Left ventricle myocardium inferior (tissue), 1 donor: ENCODE measurements at regions of chr11 and their contacts with region 1.

Region 1: DNA sequence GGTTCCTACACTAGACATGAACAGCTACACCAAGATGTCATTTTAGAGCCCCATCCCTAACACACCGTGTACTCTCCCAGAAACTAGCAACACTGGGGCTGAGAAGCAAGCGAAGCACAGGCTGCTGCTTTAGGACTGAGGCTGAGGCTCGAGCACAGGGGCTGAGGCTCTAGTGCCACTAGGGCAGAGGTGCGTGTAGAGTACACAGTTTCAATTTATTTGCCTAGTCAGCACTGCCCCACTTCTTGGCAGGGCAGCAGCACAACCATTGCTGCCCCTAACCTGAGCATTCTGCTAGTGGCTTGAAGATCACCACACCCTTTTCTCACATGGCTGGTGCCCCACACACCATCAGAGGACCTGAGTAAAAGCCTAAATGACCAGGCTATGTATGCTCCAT is 713.2 kb downstream of the LRRC4C start:
- DNase-seq: no peak
- H3K4me3 ChIP-seq: no peak overlapping the region
- H3K27ac ChIP-seq: no peak overlapping the region
- H3K4me1 ChIP-seq: no peaks in the 10 kb centered on the region
- H3K27me3 ChIP-seq: no peaks in the 10 kb centered on the region
- CTCF ChIP-seq: no peak

Region 2: GRCh38 chr11:40732132-40732531 is 14.2 kb before region 1 on chr11:
- intact Hi-C with region 1: loop called (anchors 1 kb)
- DNase-seq: no peak
- H3K4me3 ChIP-seq: no peak overlapping the region
- H3K27ac ChIP-seq: no peak overlapping the region
- H3K4me1 ChIP-seq: no peaks in the 10 kb centered on the region
- H3K27me3 ChIP-seq: no peaks in the 10 kb centered on the region
- CTCF ChIP-seq: no peak